ENCODE measurements at regions of chr3 and their contacts with region 1.

Region 1: GRCh38 chr3:190385731-190386688 is 2.0 kb upstream of the CLDN16 start:
- DNase-seq: peak; percentile 88
- H3K4me3 ChIP-seq: no peak overlapping the region
- CTCF ChIP-seq: no peak

Region 2: GRCh38 chr3:190205739-190206138 is 180.3 kb before region 1 on chr3:
- in situ Hi-C with region 1: no loop called
- DNase-seq: no peak
- H3K4me3 ChIP-seq: no peak overlapping the region
- CTCF ChIP-seq: no peak

Region 3: GRCh38 chr3:190443257-190443656 is 57.2 kb after region 1 on chr3:
- in situ Hi-C with region 1: loop called (anchors 5 kb)
- DNase-seq: no peak
- H3K4me3 ChIP-seq: no peak overlapping the region
- CTCF ChIP-seq: peak; percentile 52